ENCODE measurements at regions of chr22 and their contacts with region 1.

Region 1: DNA sequence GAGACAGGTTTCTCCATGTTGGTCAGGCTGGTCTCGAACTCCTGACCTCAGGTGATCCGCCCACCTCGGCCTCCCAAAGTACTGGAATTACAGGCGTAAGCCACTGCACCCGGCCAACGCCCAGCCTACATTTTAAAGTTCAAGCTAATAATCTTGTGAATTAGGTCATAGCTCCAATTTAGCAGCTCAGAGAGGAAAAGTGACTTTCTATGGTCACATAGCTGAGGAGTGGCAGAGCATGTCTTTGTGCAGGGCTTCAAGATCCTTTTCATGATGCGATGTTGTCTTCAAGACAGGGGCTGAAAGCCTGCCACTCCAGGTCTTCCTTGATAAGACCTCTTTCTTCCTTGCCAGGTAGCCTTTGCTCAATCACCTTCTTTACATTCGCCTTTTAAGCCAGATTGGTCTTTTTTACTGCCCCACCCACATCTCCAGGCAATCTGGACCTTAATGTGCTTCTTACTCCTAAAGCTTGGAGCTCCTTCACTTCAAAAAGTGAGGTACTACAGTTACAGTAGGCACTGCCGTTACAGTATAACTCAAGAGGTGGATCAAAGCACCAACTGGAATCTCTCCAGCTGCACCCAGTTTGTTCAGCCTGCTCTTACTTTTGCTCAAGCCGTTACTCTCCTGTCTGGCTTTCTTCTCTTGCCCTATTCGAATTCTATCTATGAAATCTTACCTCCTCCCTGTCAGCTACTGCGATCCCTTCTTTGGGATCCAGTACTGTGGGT is 18.2 kb downstream of the YWHAH start:
- DNase-seq: no peak
- H3K4me3 ChIP-seq: no peak overlapping the region
- H3K27ac ChIP-seq: no peak overlapping the region
- H3K4me1 ChIP-seq: no peaks in the 10 kb centered on the region
- H3K27me3 ChIP-seq: no peaks in the 10 kb centered on the region
- CTCF ChIP-seq: no peak

Region 2: GRCh38 chr22:31616315-31617001 is 346.1 kb before region 1 on chr22:
- CTCF ChIA-PET with region 1: no interaction called
- dilution Hi-C with region 1: loop called (anchors 5 kb)
- in situ Hi-C with region 1: no loop called
- intact Hi-C with region 1: no loop called
- DNase-seq: no peak
- H3K4me3 ChIP-seq: no peak overlapping the region
- H3K27ac ChIP-seq: no peak overlapping the region
- H3K4me1 ChIP-seq: no peaks in the 10 kb centered on the region
- H3K27me3 ChIP-seq: no peaks in the 10 kb centered on the region
- CTCF ChIP-seq: no peak

Region 3: DNA sequence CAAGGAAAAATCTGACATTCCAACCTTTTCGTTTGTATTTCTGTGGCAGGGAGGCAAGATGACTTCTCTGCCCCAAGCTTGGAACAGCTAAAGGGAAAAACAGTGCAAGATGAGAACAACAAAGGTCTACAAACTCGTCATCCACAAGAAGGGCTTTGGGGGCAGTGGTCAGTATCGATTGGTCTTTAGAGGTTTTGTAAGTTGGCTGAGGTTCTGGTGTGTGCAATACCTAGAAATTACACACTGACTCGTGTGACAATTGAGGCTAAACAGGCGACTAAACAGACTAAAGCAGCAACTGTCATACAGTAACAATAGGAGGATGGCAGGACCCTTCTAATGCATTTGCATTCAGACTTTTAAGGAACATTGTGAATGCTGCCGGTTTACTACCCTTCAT is 207.7 kb before region 1 on chr22:
- CTCF ChIA-PET with region 1: no interaction called
- dilution Hi-C with region 1: loop called (anchors 5 kb)
- in situ Hi-C with region 1: no loop called
- intact Hi-C with region 1: no loop called
- DNase-seq: no peak
- H3K4me3 ChIP-seq: peak overlapping the region; percentile 82 to 94 (median 87)
- H3K27ac ChIP-seq: peak overlapping the region; percentile 91
- H3K4me1 ChIP-seq: peaks cover 26% of the 10 kb centered on the region
- H3K27me3 ChIP-seq: no peaks in the 10 kb centered on the region
- CTCF ChIP-seq: no peak

Region 4: GRCh38 chr22:31929167-31929930 is 33.2 kb before region 1 on chr22:
- CTCF ChIA-PET with region 1: no interaction called
- dilution Hi-C with region 1: loop called (anchors 5 kb)
- in situ Hi-C with region 1: no loop called
- intact Hi-C with region 1: no loop called
- DNase-seq: no peak
- H3K4me3 ChIP-seq: no peak overlapping the region
- H3K27ac ChIP-seq: no peak overlapping the region
- H3K4me1 ChIP-seq: no peaks in the 10 kb centered on the region
- H3K27me3 ChIP-seq: no peaks in the 10 kb centered on the region
- CTCF ChIP-seq: no peak

Region 5: DNA sequence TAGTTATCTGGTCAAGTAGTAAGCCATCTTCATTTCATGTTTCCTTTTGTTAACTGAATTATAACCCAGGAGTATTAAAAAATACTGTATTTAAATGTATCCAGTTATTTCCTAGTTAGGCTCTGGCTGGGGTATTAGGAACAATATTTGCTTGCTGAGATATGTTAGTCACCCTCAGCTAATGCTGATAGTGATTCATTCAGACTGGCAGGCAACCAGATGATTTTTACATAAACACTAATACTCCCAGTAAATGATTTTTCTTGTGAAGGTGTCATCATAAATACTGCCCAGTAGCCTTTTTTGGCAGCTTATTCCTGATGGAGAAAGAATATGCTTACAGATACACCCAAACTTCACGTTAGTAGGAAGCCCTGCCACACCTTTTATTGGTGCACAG is 10.1 kb before region 1 on chr22:
- CTCF ChIA-PET with region 1: interaction called, 15 read pairs
- dilution Hi-C with region 1: no loop called
- in situ Hi-C with region 1: no loop called
- intact Hi-C with region 1: no loop called
- DNase-seq: peak; percentile 79
- H3K4me3 ChIP-seq: no peak overlapping the region
- H3K27ac ChIP-seq: peak overlapping the region; percentile 2
- H3K4me1 ChIP-seq: peaks cover 34% of the 10 kb centered on the region
- H3K27me3 ChIP-seq: no peaks in the 10 kb centered on the region
- CTCF ChIP-seq: no peak

Region 6: DNA sequence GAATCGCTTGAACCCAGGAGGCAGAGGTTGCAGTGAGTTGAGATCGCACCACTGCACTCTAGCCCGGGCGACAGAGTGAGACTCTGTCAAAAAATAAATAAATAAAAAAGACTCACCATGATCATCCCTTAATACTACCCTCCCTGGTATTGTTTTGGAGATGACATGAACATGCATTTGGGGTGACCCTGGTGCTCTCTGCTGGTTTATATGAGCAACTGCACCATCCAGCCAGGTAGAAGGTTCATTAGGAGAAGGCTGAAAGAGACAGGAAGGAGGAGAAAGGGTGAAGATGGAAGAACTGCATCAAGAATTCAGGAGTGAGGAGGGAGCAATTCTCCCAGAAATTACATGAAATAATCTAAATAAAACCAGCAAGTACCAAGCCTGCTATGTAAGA is 118.3 kb after region 1 on chr22:
- CTCF ChIA-PET with region 1: no interaction called
- dilution Hi-C with region 1: loop called (anchors 5 kb)
- in situ Hi-C with region 1: no loop called
- intact Hi-C with region 1: no loop called
- DNase-seq: peak; percentile 66
- H3K4me3 ChIP-seq: no peak overlapping the region
- H3K27ac ChIP-seq: no peak overlapping the region
- H3K4me1 ChIP-seq: peaks cover 12% of the 10 kb centered on the region
- H3K27me3 ChIP-seq: no peaks in the 10 kb centered on the region
- CTCF ChIP-seq: peak; percentile 89 to 93

Measured in mammary epithelial cell (primary cell).